ENCODE measurements at regions of chr19 and their contacts with region 1.

Region 1: GRCh38 chr19:49520705-49521319 is 7.0 kb upstream of the RCN3 start:
- DNase-seq: no peak
- H3K4me3 ChIP-seq: no peak overlapping the region
- H3K27ac ChIP-seq: no peak overlapping the region
- H3K4me1 ChIP-seq: no peaks in the 10 kb centered on the region; a peak in 1 of 7 replicates
- H3K27me3 ChIP-seq: no peaks in the 10 kb centered on the region
- CTCF ChIP-seq: no peak
- EP300 ChIP-seq: no peak
- POLR2A ChIP-seq: no peak
- RAD21 ChIP-seq: no peak

Region 2: DNA sequence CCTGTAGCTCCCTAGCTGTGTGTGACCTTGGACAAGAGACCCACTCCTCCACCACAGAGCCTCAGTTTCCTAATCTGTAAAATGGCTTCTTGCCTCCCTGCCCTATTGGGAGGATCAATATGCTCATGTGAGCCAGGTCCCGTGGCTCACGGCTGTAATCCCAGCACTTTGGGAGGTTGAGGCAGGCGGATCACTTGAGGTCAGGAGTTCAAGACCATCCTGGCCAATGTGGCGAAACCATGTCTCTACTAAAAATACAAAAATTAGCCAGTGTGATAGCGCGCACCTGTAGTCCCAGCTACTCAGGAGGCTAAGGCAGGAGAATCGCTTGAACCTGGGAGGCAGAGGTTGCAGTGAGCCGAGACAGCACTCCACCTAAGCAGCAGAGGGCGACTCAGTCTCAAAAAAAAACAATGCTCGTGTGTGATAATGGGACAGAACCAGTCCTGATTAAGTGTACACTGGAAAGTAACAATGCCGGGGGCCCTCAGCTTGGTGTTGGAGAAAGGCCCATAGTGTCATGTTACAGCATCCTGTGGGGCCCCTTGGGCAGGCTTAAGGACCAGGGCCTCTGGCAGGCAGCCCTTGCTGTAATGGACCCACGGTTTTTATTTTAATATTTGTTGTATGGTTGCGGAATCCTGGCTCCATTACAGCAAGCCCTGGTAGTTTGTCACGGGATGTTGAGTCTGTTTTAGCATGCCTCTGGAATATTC is 17.8 kb before region 1 on chr19:
- CTCF ChIA-PET with region 1: interaction called, 11 read pairs
- POLR2A ChIA-PET with region 1: interaction called, 3 read pairs
- DNase-seq: no peak
- H3K4me3 ChIP-seq: no peak overlapping the region
- H3K27ac ChIP-seq: no peak overlapping the region
- H3K4me1 ChIP-seq: peaks cover 0 to 22% (median 17%) of the 10 kb centered on the region in 4 experiments; a peak in 6 of 7 replicates
- H3K27me3 ChIP-seq: no peaks in the 10 kb centered on the region
- CTCF ChIP-seq: peak; percentile 40 to 45 (median 41); a peak in 3 of 4 replicates
- EP300 ChIP-seq: no peak
- POLR2A ChIP-seq: no peak
- RAD21 ChIP-seq: peak; percentile 55 to 59

Measured in H1 (cell line).